ENCODE measurements at regions of chr22 and their contacts with region 1.

Region 1: DNA sequence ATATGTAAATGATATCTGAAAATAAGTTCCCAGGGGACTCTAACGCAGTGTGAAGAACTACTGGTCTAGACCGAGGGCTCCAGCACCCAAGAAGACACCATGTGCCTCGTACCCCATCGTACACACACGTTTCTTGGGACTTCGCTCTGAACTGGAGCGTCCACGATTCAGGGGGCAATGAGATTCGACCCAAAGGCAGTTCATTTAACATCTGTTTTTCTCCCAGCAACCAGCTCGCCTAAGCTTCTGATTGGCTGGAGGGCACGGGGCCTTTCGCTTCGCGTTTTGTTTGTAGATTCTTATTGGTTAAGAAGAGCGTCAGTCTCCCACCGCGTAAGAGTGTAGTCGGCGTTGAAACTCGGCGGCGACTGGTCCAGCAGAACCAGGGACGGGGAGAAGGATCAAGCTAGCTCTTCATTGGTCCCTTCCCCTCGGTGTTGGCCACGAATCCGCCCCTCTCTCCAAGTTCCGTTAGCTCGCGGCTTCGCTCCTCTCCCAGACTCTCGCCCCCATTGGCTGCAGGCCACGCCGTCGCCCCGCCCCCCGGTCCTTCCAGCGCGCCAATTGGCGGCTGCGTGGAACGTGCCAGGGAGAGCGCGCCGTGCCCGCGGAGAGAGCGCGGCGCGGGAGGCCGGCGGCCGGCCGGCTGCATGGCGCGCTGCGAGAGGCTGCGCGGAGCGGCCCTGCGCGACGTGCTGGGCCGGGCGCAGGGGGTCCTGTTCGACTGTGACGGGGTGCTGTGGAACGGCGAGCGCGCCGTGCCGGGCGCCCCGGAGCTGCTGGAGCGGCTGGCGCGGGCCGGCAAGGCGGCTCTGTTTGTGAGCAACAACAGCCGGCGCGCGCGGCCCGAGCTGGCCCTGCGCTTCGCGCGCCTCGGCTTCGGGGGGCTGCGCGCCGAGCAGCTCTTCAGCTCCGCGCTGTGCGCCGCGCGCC is at the start of gene PDXP:
- DNase-seq: peak; percentile 96
- ATAC-seq: peak; percentile 97
- H3K4me3 ChIP-seq: peak within 1 kb of the TSS; percentile 69 to 88
- H3K27ac ChIP-seq: peak within 1 kb of the TSS; percentile 93
- H3K4me1 ChIP-seq: peaks cover 17% of the 10 kb centered on the region
- H3K27me3 ChIP-seq: no peaks in the 10 kb centered on the region
- CTCF ChIP-seq: no peak
- total RNA-seq, gene PDXP: 17.6 TPM

Region 2: DNA sequence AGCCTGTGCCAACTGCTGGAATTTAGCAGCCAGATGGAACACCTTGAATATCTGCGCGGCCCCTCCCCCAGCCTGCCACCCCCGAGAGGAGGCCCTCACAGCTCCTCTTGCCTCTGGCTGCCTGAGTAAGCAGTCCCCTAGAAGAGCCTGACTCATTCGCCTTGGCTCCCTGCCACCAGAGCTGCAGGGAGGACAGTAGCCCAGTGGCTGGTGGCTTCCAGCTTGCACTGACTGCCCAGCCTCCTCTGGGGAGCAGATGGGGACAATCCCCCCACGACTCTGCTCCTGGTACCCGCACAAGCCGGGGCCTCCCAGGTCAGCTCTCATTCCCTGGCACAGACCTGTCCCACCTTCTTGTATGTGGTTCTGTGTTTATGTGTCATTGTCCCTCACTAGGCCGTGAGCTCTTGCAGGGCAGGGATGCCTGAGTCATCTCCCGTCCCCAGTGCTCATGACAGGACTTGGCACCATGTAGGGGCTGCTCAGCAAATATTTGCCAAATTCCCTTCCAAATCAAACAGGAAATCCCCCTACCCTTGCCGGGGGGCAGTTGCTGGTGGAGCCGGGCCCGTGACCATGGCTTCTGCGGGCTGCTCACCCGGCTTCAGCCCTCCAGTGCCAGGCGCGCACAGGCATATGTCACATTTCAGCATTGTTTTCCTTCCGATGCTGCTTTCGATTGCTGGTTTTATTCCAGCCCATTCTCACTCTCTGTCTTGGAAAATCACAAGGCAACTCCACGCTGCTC is 998.5 kb before region 1 on chr22:
- CTCF ChIA-PET with region 1: no interaction called
- POLR2A ChIA-PET with region 1: interaction called, 12 read pairs
- in situ Hi-C with region 1: no loop called
- intact Hi-C with region 1: no loop called
- DNase-seq: peak; percentile 78
- ATAC-seq: peak; percentile 96
- H3K4me3 ChIP-seq: peak overlapping the region in 1 of 2 experiments; percentile 29; a peak in 2 of 4 replicates
- H3K27ac ChIP-seq: peak overlapping the region; percentile 90
- H3K4me1 ChIP-seq: peaks cover 31% of the 10 kb centered on the region
- H3K27me3 ChIP-seq: no peaks in the 10 kb centered on the region
- CTCF ChIP-seq: no peak

Region 3: GRCh38 chr22:37381489-37381888 is 276.9 kb before region 1 on chr22:
- CTCF ChIA-PET with region 1: no interaction called
- POLR2A ChIA-PET with region 1: interaction called, 10 read pairs
- in situ Hi-C with region 1: no loop called
- intact Hi-C with region 1: no loop called
- DNase-seq: no peak
- ATAC-seq: no peak
- H3K4me3 ChIP-seq: no peak overlapping the region
- H3K27ac ChIP-seq: no peak overlapping the region
- H3K4me1 ChIP-seq: peaks cover 12% of the 10 kb centered on the region
- H3K27me3 ChIP-seq: no peaks in the 10 kb centered on the region
- CTCF ChIP-seq: no peak

Region 4: DNA sequence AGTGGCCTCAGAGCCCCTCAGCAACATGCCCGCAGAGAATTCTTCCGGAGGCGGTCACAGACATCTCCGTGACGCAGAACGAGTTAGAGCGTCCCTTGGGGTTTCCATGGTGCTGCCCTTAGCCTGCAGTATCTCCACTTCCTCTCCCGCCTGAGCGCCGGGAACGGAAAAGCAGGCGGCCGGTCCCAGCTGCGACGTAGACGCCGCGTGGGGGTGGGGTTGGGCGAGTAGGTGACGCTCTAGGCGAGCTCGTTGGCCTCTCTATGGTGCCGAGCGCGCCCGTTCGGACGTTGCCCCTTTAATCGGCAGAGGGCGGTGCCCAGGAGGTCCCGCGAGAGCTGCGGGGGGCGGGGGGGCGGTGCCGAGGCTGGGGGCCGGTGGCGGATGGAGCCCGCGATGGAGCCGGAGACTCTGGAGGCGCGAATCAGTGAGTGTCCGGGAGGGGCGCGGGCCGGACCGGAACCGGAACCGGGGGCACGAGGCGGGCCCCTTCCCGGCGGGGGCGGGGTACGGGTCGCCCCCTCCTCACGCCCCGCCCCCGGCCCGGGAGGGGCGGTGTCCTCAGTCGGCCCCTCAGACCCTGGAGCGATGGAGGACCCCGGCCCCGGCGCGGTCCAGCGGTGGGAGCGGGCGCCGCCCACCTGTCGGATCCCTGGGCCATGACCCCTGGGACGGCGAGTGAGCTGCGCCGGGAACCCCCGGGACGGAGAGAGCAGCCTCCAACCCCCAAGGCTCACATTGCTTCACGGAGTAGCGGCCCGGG is 49.7 kb before region 1 on chr22 and contains the start of gene GGA1:
- CTCF ChIA-PET with region 1: interaction called, 5 read pairs
- POLR2A ChIA-PET with region 1: interaction called, 10 read pairs
- in situ Hi-C with region 1: no loop called
- intact Hi-C with region 1: no loop called
- DNase-seq: peak; percentile 84
- ATAC-seq: peak; percentile 93
- H3K4me3 ChIP-seq: peak within 1 kb of the TSS; percentile 68 to 74
- H3K27ac ChIP-seq: peak within 1 kb of the TSS; percentile 94
- H3K4me1 ChIP-seq: peaks cover 3% of the 10 kb centered on the region
- H3K27me3 ChIP-seq: no peaks in the 10 kb centered on the region
- CTCF ChIP-seq: no peak
- total RNA-seq, gene GGA1: 45.4 TPM

Region 5: DNA sequence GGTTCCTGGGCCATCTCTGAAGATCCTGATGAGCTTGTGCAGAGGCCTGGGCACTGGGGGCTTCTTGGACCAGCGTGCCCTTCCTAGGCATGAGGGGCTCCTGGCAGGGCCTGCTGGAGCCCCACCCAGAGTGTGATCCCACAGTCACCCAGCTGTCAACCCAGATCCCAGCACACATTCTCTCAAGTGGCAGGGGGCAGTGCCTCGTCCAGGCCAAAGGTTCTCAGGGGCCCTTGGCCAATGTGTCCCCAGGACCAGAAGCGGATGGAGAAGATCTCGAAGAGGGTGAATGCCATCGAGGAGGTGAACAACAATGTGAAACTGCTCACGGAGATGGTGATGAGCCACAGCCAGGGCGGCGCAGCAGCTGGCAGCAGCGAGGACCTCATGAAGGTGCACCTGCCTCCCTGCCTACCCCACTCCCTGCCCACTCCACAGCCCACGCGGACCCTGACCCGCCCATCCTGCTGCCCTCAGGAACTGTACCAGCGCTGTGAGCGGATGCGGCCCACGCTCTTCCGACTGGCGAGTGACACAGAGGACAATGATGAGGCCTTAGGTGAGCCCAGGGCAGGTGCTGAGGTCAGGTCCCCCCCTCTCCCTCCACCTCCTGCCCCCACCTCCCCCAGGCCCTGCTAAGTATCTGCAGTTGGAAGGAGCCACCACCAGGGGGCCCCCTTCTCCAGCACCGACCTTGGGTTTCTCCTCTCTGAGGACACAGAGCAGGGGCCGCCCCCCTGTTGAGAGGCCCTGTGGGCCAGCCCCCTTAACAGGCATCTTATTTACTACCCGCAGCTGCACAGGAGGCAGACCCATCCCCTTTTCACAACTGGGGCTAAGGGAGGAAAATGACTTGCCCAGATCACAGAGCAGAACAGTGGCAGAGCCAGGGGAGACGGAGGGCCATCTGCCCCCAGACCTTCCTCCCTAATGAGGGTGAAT is 35.1 kb before region 1 on chr22:
- CTCF ChIA-PET with region 1: no interaction called
- POLR2A ChIA-PET with region 1: no interaction called
- in situ Hi-C with region 1: no loop called
- intact Hi-C with region 1: no loop called
- DNase-seq: no peak
- ATAC-seq: peak; percentile 77
- H3K4me3 ChIP-seq: no peak overlapping the region
- H3K27ac ChIP-seq: no peak overlapping the region
- H3K4me1 ChIP-seq: no peaks in the 10 kb centered on the region
- H3K27me3 ChIP-seq: no peaks in the 10 kb centered on the region
- CTCF ChIP-seq: peak; percentile 91

Region 6: DNA sequence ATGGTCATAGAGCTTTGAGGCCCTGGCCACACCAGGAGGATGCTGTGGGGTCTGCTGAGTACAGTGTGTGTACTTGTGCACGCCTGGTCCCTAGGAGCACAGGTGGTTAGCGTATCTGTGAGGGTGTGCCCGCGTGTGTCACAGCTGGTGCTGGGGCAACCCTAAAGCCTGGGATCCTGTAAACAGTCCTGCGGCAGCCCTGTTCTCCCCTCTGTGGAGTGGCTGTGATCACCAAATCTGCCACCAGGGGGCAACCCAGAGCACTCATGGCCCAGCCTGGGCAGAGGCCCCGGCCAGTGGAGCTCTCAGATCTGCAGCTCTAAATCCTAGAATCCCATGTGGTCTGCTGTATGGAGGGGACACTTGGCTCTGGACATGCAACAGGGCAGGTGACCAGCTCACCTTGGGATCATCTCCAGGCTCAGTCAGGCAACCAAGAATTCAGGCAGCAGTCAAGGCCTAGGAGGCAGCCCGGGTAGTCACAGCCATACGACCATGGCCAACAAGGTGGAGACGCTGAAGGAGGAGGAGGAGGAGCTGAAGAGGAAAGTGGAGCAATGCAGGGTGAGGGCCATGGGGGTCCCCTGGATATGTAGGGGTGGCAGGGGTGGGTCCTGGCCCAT is 15.1 kb before region 1 on chr22:
- CTCF ChIA-PET with region 1: interaction called, 14 read pairs
- POLR2A ChIA-PET with region 1: no interaction called
- in situ Hi-C with region 1: no loop called
- intact Hi-C with region 1: no loop called
- DNase-seq: no peak
- ATAC-seq: peak; percentile 92
- H3K4me3 ChIP-seq: no peak overlapping the region
- H3K27ac ChIP-seq: no peak overlapping the region
- H3K4me1 ChIP-seq: peaks cover 6% of the 10 kb centered on the region; the same call in 1 of the 2 replicates
- H3K27me3 ChIP-seq: no peaks in the 10 kb centered on the region
- CTCF ChIP-seq: peak; percentile 88

Region 7: DNA sequence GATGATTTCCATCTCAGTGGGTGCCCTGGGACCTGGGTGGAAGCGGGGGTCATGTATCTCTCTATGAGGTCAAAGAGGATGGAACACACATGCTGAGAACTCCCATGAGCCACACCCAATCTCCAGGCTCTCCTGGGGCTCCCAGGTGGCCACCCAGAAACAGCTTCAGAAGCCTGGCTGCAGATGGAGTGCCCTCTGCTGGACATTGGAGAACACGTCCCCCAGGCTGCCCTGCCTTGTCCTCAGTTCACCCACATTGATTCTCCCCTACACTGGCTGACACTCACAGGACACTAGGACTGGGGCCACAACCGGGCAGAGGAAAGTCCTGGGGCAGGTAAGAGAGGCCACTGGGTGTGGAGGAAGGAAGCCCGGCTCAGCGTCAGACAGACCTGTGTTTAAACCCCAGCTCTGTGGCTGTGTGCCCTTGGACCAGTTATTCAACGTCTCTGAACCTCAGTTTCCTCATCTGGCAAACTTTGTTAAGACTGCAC is 23.2 kb after region 1 on chr22:
- CTCF ChIA-PET with region 1: interaction called, 11 read pairs
- POLR2A ChIA-PET with region 1: interaction called, 9 read pairs
- in situ Hi-C with region 1: no loop called
- intact Hi-C with region 1: no loop called
- DNase-seq: peak; percentile 58
- ATAC-seq: peak; percentile 71
- H3K4me3 ChIP-seq: no peak overlapping the region
- H3K27ac ChIP-seq: peak overlapping the region; percentile 59
- H3K4me1 ChIP-seq: peaks cover 32% of the 10 kb centered on the region
- H3K27me3 ChIP-seq: no peaks in the 10 kb centered on the region
- CTCF ChIP-seq: peak; percentile 91

Region 8: GRCh38 chr22:37849089-37849751 is 190.8 kb after region 1 on chr22 and contains the start of gene EIF3L:
- CTCF ChIA-PET with region 1: interaction called, 10 read pairs
- POLR2A ChIA-PET with region 1: no interaction called
- in situ Hi-C with region 1: no loop called
- intact Hi-C with region 1: no loop called
- DNase-seq: peak; percentile 43
- ATAC-seq: peak; percentile 93
- H3K4me3 ChIP-seq: peak within 1 kb of the TSS; percentile 99 to 100
- H3K27ac ChIP-seq: peak within 1 kb of the TSS; percentile 97
- H3K4me1 ChIP-seq: 0 out of 2 replicates have a peak, but pooled peaks cover 3% of the 10 kb centered on the region
- H3K27me3 ChIP-seq: no peaks in the 10 kb centered on the region
- CTCF ChIP-seq: no peak
- total RNA-seq, gene EIF3L: 211 TPM